ENCODE measurements at regions of chr6 and their contacts with region 1.

Region 1: GRCh38 chr6:1396952-1397868 is 7.8 kb downstream of the FOXF2 start:
- DNase-seq: peak; percentile 62 to 90 (median 85)
- ATAC-seq: peak; percentile 51 to 79
- H3K4me3 ChIP-seq: no peak overlapping the region
- H3K27ac ChIP-seq: no peak overlapping the region
- H3K4me1 ChIP-seq: no peaks in the 10 kb centered on the region
- H3K27me3 ChIP-seq: no peaks in the 10 kb centered on the region

Region 2: GRCh38 chr6:797479-798077 is 599.6 kb before region 1 on chr6:
- intact Hi-C with region 1: loop called in 1 of 4 experiments (anchors 5 kb)
- DNase-seq: peak in 1 of 3 donors; percentile 26
- ATAC-seq: peak; percentile 52 to 56
- H3K4me3 ChIP-seq: no peak overlapping the region
- H3K27ac ChIP-seq: no peak overlapping the region
- H3K4me1 ChIP-seq: no peaks in the 10 kb centered on the region
- H3K27me3 ChIP-seq: no peaks in the 10 kb centered on the region

Region 3: DNA sequence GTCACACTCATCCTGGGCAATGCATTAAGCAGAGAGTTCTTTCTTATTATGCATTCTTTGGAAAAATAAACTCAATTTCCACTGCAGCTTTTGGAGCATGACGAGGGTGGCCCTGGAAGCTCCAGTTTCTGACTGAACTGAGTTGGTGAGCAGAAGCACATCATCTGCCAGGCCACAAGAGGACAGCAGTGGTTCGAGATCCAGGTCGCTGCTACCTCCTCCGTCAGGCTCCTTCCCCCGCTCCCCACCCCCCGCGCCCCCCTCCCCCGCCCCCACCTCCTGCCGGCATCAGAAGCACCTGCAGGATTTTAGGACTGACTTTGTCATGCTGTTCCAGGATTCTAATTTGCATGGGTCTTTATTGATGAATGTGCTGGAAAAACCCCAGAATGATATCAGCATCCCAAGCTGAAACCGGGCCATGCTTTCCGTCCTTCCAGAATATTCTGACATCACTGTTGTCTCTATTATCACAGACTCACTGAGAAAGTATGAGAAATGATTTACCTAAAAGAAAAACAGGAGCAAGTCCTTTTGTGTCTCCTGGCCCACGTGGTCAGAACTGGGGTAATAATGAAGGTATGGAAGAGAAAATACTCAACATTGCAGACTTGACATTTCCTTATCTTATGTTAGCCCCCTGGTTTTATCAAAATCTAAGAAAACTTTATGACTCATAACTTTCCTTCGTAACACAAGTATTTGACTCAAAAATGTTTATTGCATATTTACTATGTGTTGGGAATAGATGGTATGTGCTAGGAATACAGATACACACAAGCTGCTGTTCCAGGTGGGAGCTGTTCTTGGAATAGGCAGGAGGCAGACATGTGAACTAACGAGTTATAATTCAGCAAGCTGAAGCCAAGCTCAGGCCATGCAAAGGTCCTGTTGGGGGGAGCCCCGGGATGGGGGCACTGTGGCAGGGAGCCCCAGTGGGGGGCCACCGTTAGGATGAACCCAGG is 484.1 kb before region 1 on chr6:
- intact Hi-C with region 1: loop called in 1 of 4 experiments (anchors 5 kb)
- DNase-seq: no peak
- ATAC-seq: no peak
- H3K4me3 ChIP-seq: no peak overlapping the region
- H3K27ac ChIP-seq: no peak overlapping the region
- H3K4me1 ChIP-seq: no peaks in the 10 kb centered on the region
- H3K27me3 ChIP-seq: no peaks in the 10 kb centered on the region

Region 4: GRCh38 chr6:1285956-1286355 is 111.3 kb before region 1 on chr6:
- intact Hi-C with region 1: no loop called
- DNase-seq: no peak
- ATAC-seq: no peak
- H3K4me3 ChIP-seq: no peak overlapping the region
- H3K27ac ChIP-seq: no peak overlapping the region
- H3K4me1 ChIP-seq: peaks cover 4% of the 10 kb centered on the region
- H3K27me3 ChIP-seq: no peaks in the 10 kb centered on the region

Region 5: DNA sequence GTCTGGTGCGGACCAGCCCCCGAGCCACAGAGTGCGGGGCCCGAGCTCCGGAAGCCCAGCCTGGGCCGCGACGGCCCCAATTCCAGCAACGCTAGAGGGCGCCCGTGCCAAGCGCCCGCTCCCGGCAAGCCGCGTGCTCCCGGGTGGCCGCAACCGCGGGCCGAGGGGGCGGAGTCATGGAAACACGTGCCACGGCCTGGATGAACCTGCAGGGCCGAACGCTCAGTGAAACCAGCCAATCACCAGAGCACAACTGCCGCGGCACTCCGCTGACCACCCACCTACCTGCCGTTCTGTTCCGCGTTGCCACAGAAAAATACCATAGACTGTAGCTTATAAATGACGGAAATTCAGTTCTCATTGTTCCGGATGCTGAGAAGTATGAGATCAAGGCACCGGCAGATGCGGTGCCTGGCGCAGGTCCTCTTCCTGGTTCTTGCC is 126.8 kb after region 1 on chr6:
- intact Hi-C with region 1: no loop called
- DNase-seq: peak; percentile 83 to 91 (median 89)
- ATAC-seq: peak; percentile 73 to 81
- H3K4me3 ChIP-seq: no peak overlapping the region
- H3K27ac ChIP-seq: no peak overlapping the region
- H3K4me1 ChIP-seq: no peaks in the 10 kb centered on the region
- H3K27me3 ChIP-seq: no peaks in the 10 kb centered on the region

Measured in right cardiac atrium (tissue), 5 donors.